ENCODE measurements at regions of chrX and their contacts with region 1.

Region 1: GRCh38 chrX:123422877-123423276 is 238.8 kb downstream of the GRIA3 start:
- DNase-seq: peak; percentile 43
- H3K4me3 Mint-ChIP-seq: no peak overlapping the region
- H3K27ac Mint-ChIP-seq: no peak overlapping the region
- H3K4me1 Mint-ChIP-seq: peaks cover 22% of the 10 kb centered on the region
- H3K27me3 Mint-ChIP-seq: no peaks in the 10 kb centered on the region
- CTCF ChIP-seq: peak; percentile 59

Region 2: DNA sequence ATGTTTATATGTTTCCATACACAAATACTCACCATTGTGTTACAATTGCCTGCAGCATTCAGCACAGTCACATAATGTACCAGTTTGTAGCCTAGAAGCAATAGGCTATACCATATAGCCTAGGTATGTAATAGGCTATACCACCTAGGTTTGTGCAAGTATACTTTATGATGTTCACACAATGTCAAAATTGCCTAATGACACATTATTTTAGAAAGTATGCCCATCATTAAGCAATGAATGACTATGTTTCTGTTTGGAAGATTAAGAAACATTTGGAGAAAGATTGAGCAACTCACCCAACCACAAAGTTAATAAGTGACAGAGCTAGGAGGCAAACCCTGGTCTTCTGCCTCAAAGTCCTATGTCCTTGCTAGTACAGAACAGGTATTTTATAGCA is 335.6 kb before region 1 on chrX:
- CTCF ChIA-PET with region 1: no interaction called
- POLR2A ChIA-PET with region 1: interaction called, 3 read pairs
- intact Hi-C with region 1: loop called (anchors 10 kb)
- DNase-seq: peak; percentile 80
- H3K4me3 Mint-ChIP-seq: no peak overlapping the region
- H3K27ac Mint-ChIP-seq: no peak overlapping the region
- H3K4me1 Mint-ChIP-seq: peaks cover 36% of the 10 kb centered on the region
- H3K27me3 Mint-ChIP-seq: no peaks in the 10 kb centered on the region
- CTCF ChIP-seq: no peak

Region 3: GRCh38 chrX:123173833-123174232 is 249.0 kb before region 1 on chrX:
- CTCF ChIA-PET with region 1: interaction called, 4 read pairs
- POLR2A ChIA-PET with region 1: no interaction called
- intact Hi-C with region 1: loop called (anchors 2 kb)
- DNase-seq: peak; percentile 30
- H3K4me3 Mint-ChIP-seq: no peak overlapping the region
- H3K27ac Mint-ChIP-seq: no peak overlapping the region
- H3K4me1 Mint-ChIP-seq: no peaks in the 10 kb centered on the region
- H3K27me3 Mint-ChIP-seq: no peaks in the 10 kb centered on the region
- CTCF ChIP-seq: no peak

Region 4: GRCh38 chrX:123408821-123409737 is 13.8 kb before region 1 on chrX:
- CTCF ChIA-PET with region 1: interaction called, 17 read pairs
- POLR2A ChIA-PET with region 1: interaction called, 3 read pairs
- intact Hi-C with region 1: no loop called
- DNase-seq: no peak
- H3K4me3 Mint-ChIP-seq: no peak overlapping the region
- H3K27ac Mint-ChIP-seq: no peak overlapping the region
- H3K4me1 Mint-ChIP-seq: peaks cover 9% of the 10 kb centered on the region
- H3K27me3 Mint-ChIP-seq: no peaks in the 10 kb centered on the region
- CTCF ChIP-seq: no peak

Measured in MCF 10A (cell line).